Activated CD4-positive, alpha-beta T cell treated with anti-CD3 and anti-CD28 coated beads for 36 hours (primary cell): ENCODE measurements at regions of chr12 and their contacts with region 1.

Region 1: DNA sequence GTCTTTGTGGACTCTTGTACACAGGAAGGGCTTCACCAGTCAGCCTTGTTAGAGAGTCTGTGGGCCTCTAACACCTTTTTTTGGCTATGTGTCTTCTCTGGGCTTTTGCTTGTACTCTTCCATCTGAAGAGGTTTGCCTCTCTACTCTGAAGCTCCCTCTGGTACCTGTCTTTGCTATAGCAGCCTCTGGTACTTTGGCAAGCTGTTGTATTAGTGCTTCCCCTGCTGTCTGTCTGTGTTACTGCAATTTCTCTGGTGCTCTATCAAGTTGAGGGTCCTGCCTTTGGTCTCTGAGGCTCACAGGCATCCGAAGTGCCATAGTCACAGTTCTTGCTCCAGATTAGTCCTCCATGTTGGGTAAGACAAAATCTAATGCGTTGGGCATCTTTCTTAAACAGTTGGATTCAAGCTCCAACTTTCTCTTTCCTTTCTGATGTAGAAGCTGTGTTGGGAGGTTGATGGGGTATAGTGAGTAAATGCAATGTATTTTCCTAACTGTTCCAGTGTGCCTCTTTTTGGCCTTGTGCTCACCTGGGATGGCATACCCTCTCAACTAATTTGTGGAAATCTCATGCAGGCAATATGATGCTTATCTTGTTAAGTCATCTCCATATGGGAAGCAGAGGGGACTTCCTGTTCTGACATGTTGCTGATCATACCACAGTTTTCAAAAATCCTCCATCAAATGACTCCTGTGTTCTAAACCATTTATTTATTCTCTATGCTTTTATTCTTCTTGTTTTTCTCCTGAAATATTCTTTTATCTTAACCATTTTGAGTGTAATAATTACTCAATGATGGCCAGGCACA is 88.8 kb downstream of the ATF7IP start:
- DNase-seq: peak; percentile 42
- ATAC-seq: peak; percentile 92
- H3K4me3 Mint-ChIP-seq: no peak overlapping the region
- H3K27ac Mint-ChIP-seq: peak overlapping the region; percentile 78
- H3K4me1 Mint-ChIP-seq: peaks cover 46% of the 10 kb centered on the region
- H3K27me3 Mint-ChIP-seq: no peaks in the 10 kb centered on the region

Region 2: DNA sequence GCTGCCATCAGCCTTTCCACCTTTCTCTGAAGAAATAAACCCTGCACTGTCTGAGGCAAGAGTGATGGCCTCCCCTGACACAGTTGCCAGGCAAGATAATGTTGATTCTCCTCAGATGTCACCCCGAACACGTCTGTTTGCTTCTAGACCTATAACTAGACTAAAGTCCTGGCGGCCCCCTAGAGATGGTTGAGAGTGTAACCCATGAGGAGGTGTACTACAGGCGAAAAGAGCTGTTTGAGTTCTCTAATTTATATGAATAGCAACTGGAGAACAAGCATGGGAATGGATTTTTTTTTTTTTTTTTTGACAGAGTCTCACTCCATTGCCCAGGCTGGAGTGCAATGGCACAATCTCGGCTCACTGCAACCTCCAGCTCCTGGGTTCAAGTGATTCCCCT is 121.8 kb before region 1 on chr12:
- CTCF ChIA-PET with region 1: no interaction called
- POLR2A ChIA-PET with region 1: no interaction called
- intact Hi-C with region 1: no loop called
- DNase-seq: no peak
- ATAC-seq: no peak
- H3K4me3 Mint-ChIP-seq: no peak overlapping the region
- H3K27ac Mint-ChIP-seq: no peak overlapping the region
- H3K4me1 Mint-ChIP-seq: no peaks in the 10 kb centered on the region
- H3K27me3 Mint-ChIP-seq: no peaks in the 10 kb centered on the region

Region 3: DNA sequence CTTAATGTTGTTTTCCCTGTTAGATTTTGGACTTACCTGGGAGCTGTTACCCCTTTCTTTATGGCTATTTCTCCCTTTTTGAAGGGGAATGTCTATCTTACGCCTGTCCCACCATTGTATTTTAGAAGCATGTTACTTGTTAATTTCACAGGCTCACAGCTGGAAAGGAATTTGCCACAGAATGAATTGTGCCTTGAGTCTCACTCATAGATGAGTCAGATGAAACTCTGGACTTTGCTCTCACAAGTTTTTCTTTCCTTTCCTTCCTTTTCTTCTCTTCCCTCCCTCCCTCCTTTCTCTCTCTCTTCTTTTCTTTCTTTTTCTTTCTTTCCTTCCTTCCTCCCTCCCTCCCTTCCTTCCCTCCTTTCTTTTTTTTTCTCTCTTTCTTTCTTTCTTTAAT is 98.2 kb before region 1 on chr12:
- CTCF ChIA-PET with region 1: no interaction called
- POLR2A ChIA-PET with region 1: no interaction called
- intact Hi-C with region 1: no loop called
- DNase-seq: no peak
- ATAC-seq: no peak
- H3K4me3 Mint-ChIP-seq: no peak overlapping the region
- H3K27ac Mint-ChIP-seq: no peak overlapping the region
- H3K4me1 Mint-ChIP-seq: no peaks in the 10 kb centered on the region
- H3K27me3 Mint-ChIP-seq: no peaks in the 10 kb centered on the region

Region 4: GRCh38 chr12:14427929-14428328 is 26.4 kb before region 1 on chr12:
- CTCF ChIA-PET with region 1: interaction called, 4 read pairs
- POLR2A ChIA-PET with region 1: no interaction called
- intact Hi-C with region 1: loop called in 1 of 2 experiments (anchors 2 kb)
- DNase-seq: no peak
- ATAC-seq: no peak
- H3K4me3 Mint-ChIP-seq: no peak overlapping the region
- H3K27ac Mint-ChIP-seq: no peak overlapping the region
- H3K4me1 Mint-ChIP-seq: peaks cover 73% of the 10 kb centered on the region
- H3K27me3 Mint-ChIP-seq: no peaks in the 10 kb centered on the region